ENCODE measurements at regions of chr11 and their contacts with region 1.

Region 1: GRCh38 chr11:63768237-63769043 is at the start of gene ZFTA:
- DNase-seq: peak; percentile 41
- H3K4me3 ChIP-seq: peak within 1 kb of the TSS; percentile 84 to 91 (median 87)
- H3K27ac ChIP-seq: peak within 1 kb of the TSS; percentile 64
- H3K4me1 ChIP-seq: peaks cover 18% of the 10 kb centered on the region
- H3K27me3 ChIP-seq: peaks cover 3 to 6% of the 10 kb centered on the region in 2 experiments
- CTCF ChIP-seq: peak; percentile 58 to 88
- POLR2A ChIP-seq: peak; percentile 53
- total RNA-seq, gene ZFTA: 25.2 and 32.0 TPM in 2 replicates

Region 2: DNA sequence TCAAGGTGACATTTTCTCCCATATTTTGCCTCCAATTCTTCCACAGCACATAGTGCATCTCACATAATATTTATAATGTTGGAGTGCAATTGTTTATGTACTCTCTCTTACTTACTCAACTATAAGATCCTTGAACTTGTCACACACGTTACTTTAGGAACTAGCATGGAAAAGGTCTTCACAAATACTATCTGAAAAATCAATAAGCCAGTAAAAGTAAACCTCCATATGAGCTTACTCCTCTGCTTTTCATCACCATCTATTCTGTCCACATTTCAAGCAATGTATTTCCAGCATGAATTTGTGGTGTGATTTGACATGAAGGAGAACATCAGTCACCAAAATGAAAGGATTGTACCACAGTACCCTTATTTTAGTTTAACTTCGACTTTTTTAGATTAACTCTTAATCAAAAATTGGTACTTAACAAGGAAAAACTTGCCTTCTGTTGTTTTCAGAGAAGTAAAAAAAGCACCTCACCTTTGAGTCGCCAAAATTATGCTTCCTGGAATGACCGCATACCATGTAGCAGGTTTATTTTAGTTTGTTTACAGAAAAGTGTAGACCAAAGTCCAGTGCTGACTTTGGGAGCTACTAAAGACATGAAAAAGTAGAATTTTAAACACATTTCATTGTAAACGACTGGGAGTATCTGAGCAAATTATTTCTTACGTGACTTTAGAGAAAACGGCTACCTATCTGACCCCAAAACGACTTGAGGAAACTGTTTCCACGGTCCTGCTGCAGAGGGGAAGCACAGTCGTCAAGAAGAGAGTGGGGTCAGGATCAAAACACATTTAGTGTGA is 399.1 kb before region 1 on chr11 and contains the start of gene SLC22A9:
- CTCF ChIA-PET with region 1: no interaction called
- POLR2A ChIA-PET with region 1: no interaction called
- dilution Hi-C with region 1: no loop called
- intact Hi-C with region 1: no loop called
- DNase-seq: no peak
- H3K4me3 ChIP-seq: no peak within 1 kb of the TSS
- H3K27ac ChIP-seq: no peak within 1 kb of the TSS
- H3K4me1 ChIP-seq: no peaks in the 10 kb centered on the region
- H3K27me3 ChIP-seq: peaks cover 0 to 3% of the 10 kb centered on the region in 2 experiments
- CTCF ChIP-seq: no peak
- POLR2A ChIP-seq: no peak
- total RNA-seq, gene SLC22A9: not detected in 2 replicates

Region 3: DNA sequence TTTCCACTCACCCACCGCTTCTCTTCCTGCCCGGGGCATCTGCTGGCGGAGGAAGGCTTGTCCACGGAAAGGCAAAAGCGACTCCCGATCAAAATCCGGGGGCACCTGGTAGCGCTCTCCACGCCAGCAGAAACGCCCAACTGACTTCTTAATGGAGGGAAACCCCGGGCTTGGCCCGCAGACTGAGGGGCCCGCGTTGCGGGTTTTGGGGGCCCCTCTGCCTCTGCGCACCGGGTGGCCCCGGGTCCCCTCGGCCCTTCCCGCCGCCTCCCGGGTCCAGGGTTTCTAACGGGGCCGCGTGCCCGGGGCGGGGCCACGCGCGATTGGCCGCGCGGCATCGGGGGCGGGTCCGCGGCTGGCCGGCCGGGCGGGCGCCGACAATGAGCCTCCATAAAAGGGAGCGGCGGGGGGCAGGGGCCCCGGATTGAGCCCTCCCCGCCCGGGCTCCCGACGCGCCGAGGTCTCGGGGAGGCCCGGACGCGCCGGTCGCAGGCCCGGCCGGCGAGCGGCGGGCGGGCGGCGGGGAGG is 44.7 kb after region 1 on chr11 and contains the start of gene SPINDOC:
- CTCF ChIA-PET with region 1: interaction called, 4 read pairs
- POLR2A ChIA-PET with region 1: no interaction called
- dilution Hi-C with region 1: no loop called
- intact Hi-C with region 1: loop called (anchors 1 kb)
- DNase-seq: peak; percentile 61
- H3K4me3 ChIP-seq: peak within 1 kb of the TSS; percentile 65 to 73 (median 70)
- H3K27ac ChIP-seq: peak within 1 kb of the TSS; percentile 51
- H3K4me1 ChIP-seq: peaks cover 18% of the 10 kb centered on the region
- H3K27me3 ChIP-seq: no peaks in the 10 kb centered on the region
- CTCF ChIP-seq: no peak
- POLR2A ChIP-seq: peak; percentile 78
- total RNA-seq, gene SPINDOC: 51.5 and 54.5 TPM in 2 replicates

Region 4: DNA sequence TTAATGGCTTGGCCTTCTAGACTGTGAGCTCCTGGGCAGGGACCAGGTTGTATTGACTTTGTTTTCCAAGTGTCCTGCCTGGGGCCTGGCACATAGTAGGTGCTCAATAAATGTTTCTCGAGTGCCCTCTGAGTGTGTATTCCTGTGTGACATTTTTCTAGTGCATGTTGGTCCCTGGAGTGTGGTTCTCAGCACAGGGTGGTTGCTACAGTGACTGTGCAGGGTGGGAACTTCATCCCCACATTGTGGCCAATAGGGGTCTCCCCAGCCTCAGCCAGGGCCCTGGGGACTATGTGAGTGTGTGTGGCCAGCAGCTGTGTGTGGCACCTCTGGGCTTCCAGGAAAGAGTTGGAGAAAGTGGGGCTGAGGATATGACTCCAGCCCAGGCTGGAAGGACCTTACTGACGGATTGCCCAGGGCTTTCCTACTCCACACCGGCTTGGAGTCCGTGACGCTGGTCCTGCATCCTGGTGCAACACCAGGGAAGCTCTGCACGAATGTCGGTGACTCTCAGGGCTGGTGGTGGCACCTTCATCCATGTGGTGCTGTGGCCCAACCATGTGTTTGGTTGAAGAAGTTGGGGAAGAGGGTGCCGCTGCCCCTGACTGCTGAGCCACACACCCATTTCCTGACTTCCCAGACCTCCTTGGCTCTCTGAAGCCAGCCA is 61.5 kb after region 1 on chr11:
- CTCF ChIA-PET with region 1: interaction called, 14 read pairs
- POLR2A ChIA-PET with region 1: no interaction called
- dilution Hi-C with region 1: no loop called
- intact Hi-C with region 1: no loop called
- DNase-seq: peak; percentile 44
- H3K4me3 ChIP-seq: no peak overlapping the region
- H3K27ac ChIP-seq: no peak overlapping the region
- H3K4me1 ChIP-seq: no peaks in the 10 kb centered on the region
- H3K27me3 ChIP-seq: no peaks in the 10 kb centered on the region
- CTCF ChIP-seq: peak; percentile 31 to 53
- POLR2A ChIP-seq: no peak

Region 5: GRCh38 chr11:63871962-63872799 is 103.7 kb after region 1 on chr11:
- CTCF ChIA-PET with region 1: interaction called, 10 read pairs
- POLR2A ChIA-PET with region 1: no interaction called
- dilution Hi-C with region 1: no loop called
- intact Hi-C with region 1: no loop called
- DNase-seq: peak; percentile 81
- H3K4me3 ChIP-seq: no peak overlapping the region
- H3K27ac ChIP-seq: no peak overlapping the region
- H3K4me1 ChIP-seq: peaks cover 17% of the 10 kb centered on the region
- H3K27me3 ChIP-seq: no peaks in the 10 kb centered on the region
- CTCF ChIP-seq: peak; percentile 25 to 31
- POLR2A ChIP-seq: no peak

Region 6: DNA sequence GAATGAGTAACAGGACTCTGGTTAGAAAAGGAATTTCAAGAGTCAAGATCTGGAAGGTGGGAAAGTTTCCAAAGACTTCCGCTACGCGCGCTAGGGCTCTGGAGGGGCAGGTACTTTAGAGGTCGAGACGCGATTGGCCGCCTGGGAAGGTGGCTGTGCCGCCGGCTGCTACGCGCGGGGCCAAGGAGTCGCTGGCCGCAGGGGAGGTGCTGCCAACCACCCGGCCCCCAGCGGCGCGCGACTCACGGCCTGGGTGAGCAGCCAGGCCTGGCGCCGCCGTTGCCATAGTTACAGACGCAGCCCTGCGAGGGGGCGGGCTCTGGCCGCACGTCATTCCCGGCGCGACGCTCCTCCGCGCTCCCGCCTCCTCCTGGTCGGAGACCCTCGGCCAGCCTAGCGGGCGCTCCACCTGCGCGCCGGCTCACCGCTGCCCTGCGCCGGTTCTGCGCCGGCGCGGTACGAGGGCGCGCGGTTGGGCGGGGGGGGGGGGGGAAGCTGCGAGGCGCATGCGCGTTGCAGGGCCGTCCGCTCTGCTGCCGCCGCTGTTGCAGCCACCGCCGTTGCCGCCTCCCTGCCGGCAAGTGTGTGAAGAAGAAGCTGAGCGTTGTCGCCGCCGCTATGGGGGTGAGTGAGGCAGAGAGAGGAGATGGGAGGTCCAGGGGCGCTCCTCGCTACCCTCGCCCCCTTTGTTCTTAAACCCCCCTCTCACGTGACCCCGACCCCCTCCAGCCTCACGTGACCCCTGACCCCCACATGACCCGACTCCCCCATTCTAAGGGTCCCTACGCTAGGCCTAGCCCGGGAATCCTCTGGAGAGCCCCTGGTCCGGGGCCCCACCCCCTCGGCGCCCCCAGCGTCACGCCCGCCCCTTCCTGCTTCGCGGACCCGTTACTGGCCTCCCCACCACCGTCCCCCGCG is 170.3 kb after region 1 on chr11 and contains the start of gene NAA40:
- CTCF ChIA-PET with region 1: interaction called, 55 read pairs
- POLR2A ChIA-PET with region 1: no interaction called
- dilution Hi-C with region 1: no loop called
- intact Hi-C with region 1: loop called (anchors 2 kb)
- DNase-seq: peak; percentile 96
- H3K4me3 ChIP-seq: peak within 1 kb of the TSS; percentile 73 to 98 (median 78)
- H3K27ac ChIP-seq: peak within 1 kb of the TSS; percentile 43
- H3K4me1 ChIP-seq: peaks cover 11% of the 10 kb centered on the region
- H3K27me3 ChIP-seq: no peaks in the 10 kb centered on the region
- CTCF ChIP-seq: peak in 1 of 2 donors; percentile 14
- POLR2A ChIP-seq: peak; percentile 63
- total RNA-seq, gene NAA40: 30.9 and 32.3 TPM in 2 replicates

Region 7: DNA sequence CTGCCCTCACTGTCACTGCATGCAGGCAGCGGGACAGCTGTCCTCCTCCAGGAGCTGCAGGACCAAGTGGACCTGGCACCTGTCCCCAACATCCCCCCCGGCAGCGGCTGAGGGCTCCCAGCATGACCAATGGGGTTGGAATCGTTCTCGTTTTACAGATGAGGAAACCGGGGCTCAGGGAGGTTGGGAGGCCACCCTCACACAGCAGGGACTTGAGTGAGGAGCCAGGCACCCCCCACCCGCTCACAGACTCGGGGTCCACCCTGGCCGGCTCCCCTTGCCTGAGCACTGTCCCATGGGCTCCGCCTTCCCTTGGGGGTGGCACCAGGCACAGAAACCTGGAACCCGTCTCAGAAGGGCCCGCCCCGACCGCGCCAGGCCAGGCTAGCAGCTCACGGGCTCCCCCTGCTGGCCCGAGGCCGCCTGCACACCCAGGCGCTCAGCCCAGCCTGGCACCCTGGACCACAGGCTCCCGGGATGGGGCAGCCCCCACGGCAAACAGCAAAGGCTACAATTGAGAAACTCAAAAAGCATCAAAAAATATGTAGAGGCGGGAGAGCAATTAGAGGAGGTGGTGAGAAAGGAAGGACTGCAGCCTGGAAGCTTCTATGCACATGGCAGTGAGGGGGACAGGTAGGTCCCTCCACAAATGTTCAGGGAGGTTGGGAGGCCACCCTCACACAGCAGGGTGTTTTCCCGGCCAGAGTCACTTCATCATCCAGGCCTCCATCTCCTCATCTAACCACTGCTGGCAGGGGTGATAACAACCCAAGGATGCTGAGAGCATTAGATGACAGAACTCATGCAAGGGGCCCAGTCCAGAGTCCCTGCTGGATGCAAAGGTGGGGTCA is 384.6 kb after region 1 on chr11:
- CTCF ChIA-PET with region 1: interaction called, 4 read pairs
- POLR2A ChIA-PET with region 1: no interaction called
- dilution Hi-C with region 1: no loop called
- intact Hi-C with region 1: loop called (anchors 1 kb)
- DNase-seq: peak; percentile 42
- H3K4me3 ChIP-seq: no peak overlapping the region
- H3K27ac ChIP-seq: no peak overlapping the region
- H3K4me1 ChIP-seq: no peaks in the 10 kb centered on the region
- H3K27me3 ChIP-seq: no peaks in the 10 kb centered on the region
- CTCF ChIP-seq: peak; percentile 99 to 100
- POLR2A ChIP-seq: no peak

Measured in endothelial cell of umbilical vein (primary cell).